ENCODE measurements at regions of chrX and their contacts with region 1.

Region 1: DNA sequence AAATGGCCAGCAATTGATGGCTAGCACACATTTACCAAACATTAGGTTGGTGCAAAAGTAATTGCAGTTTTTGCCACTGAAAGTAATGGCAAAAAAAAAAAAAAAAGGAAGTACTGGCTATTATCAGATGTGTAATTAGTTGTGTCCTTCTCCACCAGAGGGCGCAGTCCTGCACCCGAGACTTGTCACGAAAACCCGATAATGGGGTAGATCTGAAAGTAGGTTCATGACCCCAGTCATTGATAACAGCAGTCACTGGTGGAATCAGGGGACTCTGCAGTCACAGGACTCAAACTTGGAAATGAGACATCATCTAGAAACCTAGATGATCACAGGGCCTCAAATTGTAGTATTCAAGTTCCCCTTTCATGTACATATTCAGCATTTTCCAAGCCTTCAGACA is 13.1 kb upstream of the ACOT9 start:
- DNase-seq: peak; percentile 53 to 64 (median 56)
- H3K4me3 ChIP-seq: no peak overlapping the region
- H3K4me3 Mint-ChIP-seq: peak overlapping the region in 3 of 8 donors; percentile 22 to 57 (median 31)
- H3K27ac ChIP-seq: no peak overlapping the region
- H3K27ac Mint-ChIP-seq: peak overlapping the region in 3 of 7 donors; percentile 30 to 71 (median 42)
- H3K4me1 ChIP-seq: no peaks in the 10 kb centered on the region
- H3K4me1 Mint-ChIP-seq: peaks cover 0 to 4% (median 3%) of the 10 kb centered on the region in 4 donors
- H3K27me3 ChIP-seq: no peaks in the 10 kb centered on the region
- H3K27me3 Mint-ChIP-seq: no peaks in the 10 kb centered on the region

Region 2: DNA sequence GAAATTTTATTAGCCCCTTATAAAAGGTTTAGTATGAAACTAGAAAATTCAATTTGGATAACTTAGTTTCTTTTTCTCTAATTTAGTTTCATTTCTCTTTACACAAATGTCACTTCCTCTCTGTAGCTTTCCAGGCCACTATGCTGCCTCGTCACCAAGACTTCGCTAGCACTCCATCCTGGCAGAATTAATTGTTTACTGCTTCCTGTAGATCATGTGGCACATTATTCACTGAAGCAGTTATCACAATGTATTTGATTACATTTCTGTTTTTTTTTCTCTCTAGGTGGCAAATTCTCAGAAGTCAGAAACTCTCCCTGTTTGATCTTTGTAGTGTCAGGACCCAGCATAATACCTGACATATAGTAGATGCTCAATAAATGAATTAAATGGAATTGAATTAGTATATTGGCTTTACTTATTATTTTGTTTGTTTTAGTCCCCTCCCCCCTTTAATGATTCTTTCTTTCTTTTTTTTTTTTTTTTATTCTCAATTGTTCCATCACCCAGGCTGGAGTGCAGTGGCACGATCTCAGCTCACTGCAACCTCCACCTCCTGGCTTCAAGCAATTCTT is 17.5 kb after region 1 on chrX:
- CTCF ChIA-PET with region 1: interaction called, 4 read pairs
- POLR2A ChIA-PET with region 1: interaction called, 4 read pairs
- intact Hi-C with region 1: loop called (anchors 1 kb)
- DNase-seq: peak; percentile 60 to 79 (median 76)
- H3K4me3 ChIP-seq: no peak overlapping the region
- H3K4me3 Mint-ChIP-seq: peak overlapping the region; percentile 67 to 80 (median 72)
- H3K27ac ChIP-seq: peak overlapping the region; percentile 77
- H3K27ac Mint-ChIP-seq: peak overlapping the region; percentile 83 to 97 (median 96)
- H3K4me1 ChIP-seq: peaks cover 17% of the 10 kb centered on the region
- H3K4me1 Mint-ChIP-seq: peaks cover 3 to 18% (median 8%) of the 10 kb centered on the region in 4 donors
- H3K27me3 ChIP-seq: no peaks in the 10 kb centered on the region
- H3K27me3 Mint-ChIP-seq: no peaks in the 10 kb centered on the region